ENCODE measurements at regions of chr6 and their contacts with region 1.

Region 1: GRCh38 chr6:137160763-137161162 is 12.7 kb downstream of the IL22RA2 start:
- DNase-seq: no peak
- H3K4me3 ChIP-seq: no peak overlapping the region
- H3K27ac ChIP-seq: no peak overlapping the region
- H3K4me1 ChIP-seq: no peaks in the 10 kb centered on the region
- H3K27me3 ChIP-seq: peaks cover 16% of the 10 kb centered on the region
- CTCF ChIP-seq: no peak

Region 2: DNA sequence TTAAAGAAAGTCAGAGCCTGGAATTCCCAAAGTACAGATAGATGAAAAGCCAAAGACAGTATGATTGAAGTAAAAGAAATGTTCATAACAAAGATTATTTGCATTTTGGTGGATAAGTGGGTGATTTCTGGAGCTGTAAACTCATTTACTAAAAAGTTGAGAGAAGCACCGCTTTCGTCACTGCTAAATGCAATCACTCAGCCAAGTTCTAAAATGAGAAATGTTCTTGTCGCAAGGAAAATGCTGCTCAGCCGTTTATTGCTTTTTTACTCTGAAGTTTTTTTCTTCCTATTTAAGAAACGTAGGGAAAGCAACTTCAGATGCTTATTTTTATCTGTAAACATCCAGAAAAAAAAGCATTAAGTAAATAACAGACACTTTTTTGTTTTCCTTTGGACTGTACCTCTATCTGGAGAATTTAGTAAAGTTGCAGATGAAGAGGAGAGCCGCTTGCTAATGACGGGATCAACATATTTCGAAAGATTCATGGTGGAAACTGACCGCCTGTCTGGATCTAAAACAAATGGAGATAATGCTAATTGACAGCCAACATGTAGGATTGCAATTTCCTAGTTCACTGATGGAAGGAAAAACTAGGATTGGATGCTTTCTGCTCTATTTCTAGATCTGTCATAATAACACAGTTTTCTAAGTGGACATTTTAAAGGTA is 777.4 kb before region 1 on chr6:
- CTCF ChIA-PET with region 1: no interaction called
- POLR2A ChIA-PET with region 1: no interaction called
- intact Hi-C with region 1: no loop called
- DNase-seq: no peak
- H3K4me3 ChIP-seq: no peak overlapping the region
- H3K27ac ChIP-seq: no peak overlapping the region
- H3K4me1 ChIP-seq: no peaks in the 10 kb centered on the region
- H3K27me3 ChIP-seq: peaks cover 3% of the 10 kb centered on the region
- CTCF ChIP-seq: no peak

Region 3: GRCh38 chr6:137248702-137249101 is 87.9 kb after region 1 on chr6:
- CTCF ChIA-PET with region 1: no interaction called
- POLR2A ChIA-PET with region 1: no interaction called
- intact Hi-C with region 1: no loop called
- DNase-seq: no peak
- H3K4me3 ChIP-seq: no peak overlapping the region
- H3K27ac ChIP-seq: no peak overlapping the region
- H3K4me1 ChIP-seq: no peaks in the 10 kb centered on the region
- H3K27me3 ChIP-seq: no peaks in the 10 kb centered on the region
- CTCF ChIP-seq: no peak

Region 4: DNA sequence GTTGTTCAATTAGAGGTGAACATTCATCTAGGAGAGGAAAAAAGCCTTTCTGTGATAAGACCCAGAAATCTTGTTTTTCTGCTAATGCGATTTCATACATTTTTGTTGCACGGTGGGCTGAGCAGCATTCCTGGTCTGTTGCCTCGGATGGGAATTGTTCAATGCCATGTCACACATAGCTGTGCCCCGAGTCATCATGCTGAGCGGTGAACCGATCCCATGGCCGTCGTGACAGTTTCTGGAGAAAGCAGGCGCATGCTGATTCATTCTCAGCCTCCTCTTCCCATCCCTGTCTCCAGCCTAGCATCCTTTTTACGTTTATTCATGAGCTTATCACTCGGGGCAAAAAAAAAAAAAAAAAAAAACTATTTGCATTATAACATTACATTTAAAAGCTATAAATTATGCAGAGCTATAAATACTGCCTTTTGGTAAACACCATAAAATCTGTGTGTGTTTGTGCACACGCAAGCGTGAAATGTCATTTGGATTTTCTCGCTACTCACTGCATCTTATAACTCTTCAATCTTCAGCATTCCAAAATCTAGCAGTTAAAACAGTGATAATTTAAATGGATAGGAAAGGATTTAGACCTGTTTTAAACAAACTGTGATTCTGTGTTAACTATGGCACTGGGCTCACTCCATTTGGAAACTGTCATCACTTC is 117.3 kb after region 1 on chr6:
- CTCF ChIA-PET with region 1: no interaction called
- POLR2A ChIA-PET with region 1: interaction called, 13 read pairs
- intact Hi-C with region 1: no loop called
- DNase-seq: no peak
- H3K4me3 ChIP-seq: no peak overlapping the region
- H3K27ac ChIP-seq: no peak overlapping the region
- H3K4me1 ChIP-seq: no peaks in the 10 kb centered on the region
- H3K27me3 ChIP-seq: no peaks in the 10 kb centered on the region
- CTCF ChIP-seq: no peak

Region 5: DNA sequence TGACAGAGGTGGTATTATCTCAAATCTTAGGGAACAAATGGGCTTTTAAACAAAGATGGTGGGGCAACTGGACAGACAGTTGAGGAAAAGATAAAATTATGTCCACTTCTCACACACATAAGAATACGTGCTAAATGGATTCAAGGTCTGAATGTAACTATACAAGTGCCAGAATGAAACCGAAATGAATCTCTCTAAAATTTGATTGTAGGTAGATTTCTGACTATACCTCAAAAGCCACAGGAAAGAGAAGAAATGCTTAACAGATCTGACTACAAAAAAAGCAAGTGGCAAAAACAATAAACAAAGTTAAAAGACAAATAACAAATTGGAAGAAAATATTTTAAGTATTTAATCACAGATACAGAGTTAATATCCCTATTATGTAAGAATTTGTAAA is 516.1 kb after region 1 on chr6:
- CTCF ChIA-PET with region 1: no interaction called
- POLR2A ChIA-PET with region 1: no interaction called
- intact Hi-C with region 1: no loop called
- DNase-seq: no peak
- H3K4me3 ChIP-seq: no peak overlapping the region
- H3K27ac ChIP-seq: no peak overlapping the region
- H3K4me1 ChIP-seq: no peaks in the 10 kb centered on the region
- H3K27me3 ChIP-seq: peaks cover 9% of the 10 kb centered on the region
- CTCF ChIP-seq: no peak